SK-N-SH (cell line): ENCODE measurements at regions of chr11 and their contacts with region 1.

Region 1: GRCh38 chr11:63729326-63729725 is 39.2 kb downstream of the ZFTA start:
- DNase-seq: no peak
- H3K4me3 ChIP-seq: no peak overlapping the region
- H3K27ac ChIP-seq: no peak overlapping the region
- H3K4me1 ChIP-seq: no peaks in the 10 kb centered on the region
- H3K27me3 ChIP-seq: no peaks in the 10 kb centered on the region
- CTCF ChIP-seq: no peak
- EP300 ChIP-seq: no peak
- RAD21 ChIP-seq: no peak

Region 2: GRCh38 chr11:63671322-63672155 is 57.8 kb before region 1 on chr11 and contains the start of gene ATL3:
- CTCF ChIA-PET with region 1: interaction called, 11 read pairs
- POLR2A ChIA-PET with region 1: no interaction called
- DNase-seq: peak; percentile 97
- H3K4me3 ChIP-seq: peak within 1 kb of the TSS; percentile 59 to 79
- H3K27ac ChIP-seq: peak within 1 kb of the TSS; percentile 74 to 85
- H3K4me1 ChIP-seq: peaks cover 3 to 32% of the 10 kb centered on the region in 2 experiments
- H3K27me3 ChIP-seq: no peaks in the 10 kb centered on the region
- CTCF ChIP-seq: no peak
- EP300 ChIP-seq: no peak
- RAD21 ChIP-seq: no peak
- polyA plus RNA-seq, gene ATL3: 13.1 and 17.8 TPM in 2 replicates